ENCODE measurements at regions of chr7 and their contacts with region 1.

Region 1: GRCh38 chr7:92751902-92752901 is 84.2 kb downstream of the CDK6 start:
- DNase-seq: peak; percentile 77
- H3K4me3 ChIP-seq: no peak overlapping the region
- H3K27ac ChIP-seq: peak overlapping the region; percentile 59
- H3K4me1 ChIP-seq: peaks cover 21% of the 10 kb centered on the region
- H3K27me3 ChIP-seq: no peaks in the 10 kb centered on the region
- CTCF ChIP-seq: no peak
- POLR2A ChIP-seq: no peak

Region 2: DNA sequence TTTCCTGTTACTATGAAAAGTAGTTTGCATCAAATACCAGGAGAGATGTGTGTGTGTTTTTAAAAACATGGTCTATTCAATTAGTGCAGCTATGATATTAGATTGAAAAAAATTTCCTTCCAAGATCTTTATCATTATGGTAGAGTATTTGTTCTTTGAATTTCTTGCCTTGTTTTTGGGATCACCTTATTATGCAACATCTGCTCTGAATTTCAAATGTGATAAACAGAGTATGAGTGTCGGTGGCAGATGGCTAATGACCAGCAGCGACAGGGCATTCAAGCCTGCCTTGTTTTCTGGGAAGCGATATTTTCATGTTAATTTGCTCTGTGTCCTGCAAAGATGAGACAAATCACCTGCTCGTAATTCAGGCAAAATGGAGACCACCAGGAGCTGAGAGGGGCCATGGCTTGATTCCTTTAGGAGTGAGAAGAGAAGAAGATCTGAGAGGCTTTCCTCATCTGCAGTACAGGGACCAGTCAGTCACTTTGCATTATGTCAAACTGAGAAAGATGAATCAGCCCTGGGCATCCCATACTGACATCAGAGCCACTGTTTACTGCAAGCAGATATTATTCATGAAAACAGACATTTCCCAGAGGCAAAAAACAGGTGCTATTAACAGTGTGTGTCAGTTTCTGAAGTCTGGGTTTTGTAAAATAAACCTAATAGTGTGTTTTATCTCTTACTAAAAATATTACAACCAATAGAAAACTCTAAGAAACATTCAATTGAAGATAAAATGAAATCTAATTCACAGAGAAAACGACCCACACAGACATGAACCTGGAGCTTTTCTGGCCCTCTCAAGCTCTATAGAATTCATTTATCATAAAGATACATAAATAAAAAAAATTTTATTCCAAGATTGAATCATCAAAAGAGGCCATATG is 16.5 kb after region 1 on chr7:
- CTCF ChIA-PET with region 1: interaction called, 6 read pairs
- POLR2A ChIA-PET with region 1: no interaction called
- dilution Hi-C with region 1: no loop called
- intact Hi-C with region 1: loop called (anchors 2 kb)
- DNase-seq: no peak
- H3K4me3 ChIP-seq: no peak overlapping the region
- H3K27ac ChIP-seq: no peak overlapping the region
- H3K4me1 ChIP-seq: peaks cover 14% of the 10 kb centered on the region
- H3K27me3 ChIP-seq: no peaks in the 10 kb centered on the region
- CTCF ChIP-seq: no peak
- POLR2A ChIP-seq: no peak